Left cardiac atrium (tissue), 4 donors: ENCODE measurements at regions of chr12 and their contacts with region 1.

Region 1: DNA sequence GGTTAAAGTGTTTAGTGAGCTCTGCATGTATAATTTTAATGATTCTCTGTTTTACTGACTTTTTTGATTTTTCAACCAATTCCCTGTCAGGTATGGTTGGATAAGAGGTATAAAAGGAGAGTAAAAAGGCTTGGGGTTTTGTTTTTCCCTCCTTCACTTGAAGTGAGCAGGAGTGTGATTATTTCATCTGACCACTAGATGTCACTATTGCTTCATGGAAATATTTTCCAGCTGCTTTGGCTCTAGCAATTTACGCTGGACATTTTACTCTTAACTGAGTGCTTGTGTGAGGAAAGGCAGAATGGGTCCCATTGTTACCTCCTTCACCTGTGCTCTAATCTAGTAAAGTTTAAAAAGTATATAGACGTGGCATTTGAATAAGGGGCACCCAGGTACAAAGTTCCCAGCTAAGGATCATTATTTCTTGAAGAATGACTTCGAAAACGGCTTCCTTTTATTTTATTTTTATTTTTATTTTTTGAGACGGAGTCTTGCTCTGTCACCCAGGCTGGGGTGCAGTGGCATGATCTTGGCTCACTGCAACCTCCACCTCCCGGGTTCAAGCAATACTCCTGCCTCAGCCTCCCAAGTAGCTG is 66.5 kb downstream of the TBC1D30 start:
- DNase-seq: no peak
- ATAC-seq: peak; percentile 54 to 65

Region 2: DNA sequence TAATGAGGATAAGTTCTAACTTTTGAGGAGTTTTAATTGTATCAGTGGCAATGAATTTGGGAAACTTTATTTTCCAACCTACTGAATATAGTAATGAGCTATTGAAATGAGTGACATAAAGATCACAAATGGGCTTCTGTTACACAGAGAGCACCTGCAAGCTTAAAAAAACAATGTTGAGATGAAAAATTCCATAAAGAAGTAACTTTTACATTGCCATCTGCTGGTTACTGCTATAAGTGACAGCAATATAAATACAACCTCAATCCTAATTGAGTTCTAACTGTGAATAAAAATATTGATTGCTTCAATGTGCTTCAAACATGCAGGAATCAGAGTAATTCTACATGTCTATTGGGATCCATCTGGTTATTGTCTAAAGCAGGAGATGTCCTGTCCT is 216.0 kb after region 1 on chr12:
- intact Hi-C with region 1: loop called in 1 of 2 experiments (anchors 10 kb)
- DNase-seq: no peak
- ATAC-seq: no peak

Region 3: GRCh38 chr12:65121049-65121955 is 230.3 kb after region 1 on chr12 and contains the start of gene WIF1:
- intact Hi-C with region 1: loop called in 1 of 2 experiments (anchors 5 kb)
- DNase-seq: peak; percentile 41
- ATAC-seq: peak; percentile 30 to 57
- total RNA-seq, gene WIF1: 0.91 TPM in 1 of 2 donors, not detected in the other

Region 4: DNA sequence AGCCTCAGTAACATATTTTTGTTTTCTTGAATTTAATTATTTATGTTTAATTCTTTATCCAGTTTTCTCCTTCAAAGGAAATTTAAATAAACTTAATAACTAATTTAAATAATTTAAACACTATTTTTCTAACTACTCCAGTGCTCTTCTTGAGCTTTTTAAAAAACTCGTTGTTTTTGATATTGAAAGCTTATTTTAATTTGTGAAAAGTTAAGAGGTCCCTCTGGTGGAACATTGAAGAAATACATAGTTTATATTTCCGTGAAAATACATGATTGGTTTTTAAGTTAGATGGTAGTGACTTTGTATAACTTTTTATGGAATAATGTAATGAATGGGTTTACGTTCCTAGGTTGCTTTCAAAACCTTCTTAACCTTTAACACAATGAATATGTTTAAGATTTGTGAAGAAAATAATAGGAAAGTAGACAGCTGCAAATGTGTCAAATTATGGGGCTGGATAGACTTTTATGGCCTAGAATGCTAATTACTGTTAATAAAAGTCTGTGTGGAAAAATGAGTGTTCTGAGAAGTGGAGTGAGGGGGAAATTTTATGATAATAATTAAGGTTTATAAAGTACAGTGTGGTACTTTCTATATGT is 341.6 kb after region 1 on chr12:
- intact Hi-C with region 1: loop called (anchors 5 to 10 kb)
- DNase-seq: no peak
- ATAC-seq: no peak

Region 5: DNA sequence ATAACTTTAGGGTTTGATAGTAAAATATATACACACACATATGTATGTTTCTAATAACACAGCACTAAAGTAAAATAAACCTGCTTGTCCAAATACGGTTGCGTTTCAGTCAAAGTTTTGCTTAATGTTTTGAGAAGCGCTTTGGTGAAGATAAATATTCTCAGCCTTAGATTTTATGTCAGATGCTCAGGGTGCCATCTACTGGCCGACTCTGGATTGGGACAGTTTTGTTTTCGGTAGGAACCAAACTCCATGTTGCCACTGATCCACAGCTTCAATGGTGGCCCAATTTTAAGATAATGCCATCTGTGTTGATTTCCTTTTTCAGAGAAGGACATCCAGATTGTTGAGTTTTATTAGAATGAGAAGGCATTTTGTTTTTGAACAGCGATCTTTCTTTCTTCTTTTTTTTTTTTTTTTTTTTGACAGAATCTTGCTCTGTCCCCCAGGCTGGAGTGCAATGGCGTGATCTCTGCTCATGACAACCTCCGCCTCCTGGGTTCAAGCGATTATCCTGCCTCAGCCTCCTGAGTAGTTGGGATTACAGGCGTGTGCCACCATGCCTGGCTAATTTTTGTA is 1196.5 kb after region 1 on chr12:
- intact Hi-C with region 1: loop called in 1 of 2 experiments (anchors 10 kb)
- DNase-seq: peak; percentile 55
- ATAC-seq: peak; percentile 63 to 65